ENCODE measurements at regions of chr4 and their contacts with region 1.

Region 1: GRCh38 chr4:54064295-54065111 is at the start of gene CHIC2:
- DNase-seq: peak; percentile 94
- H3K4me3 ChIP-seq: peak within 1 kb of the TSS; percentile 71 to 78 (median 78)
- H3K27ac ChIP-seq: peak within 1 kb of the TSS; percentile 84
- H3K4me1 ChIP-seq: peaks cover 43% of the 10 kb centered on the region
- H3K27me3 ChIP-seq: no peaks in the 10 kb centered on the region
- CTCF ChIP-seq: no peak
- total RNA-seq, gene CHIC2: 45.4 to 46.7 TPM

Region 2: DNA sequence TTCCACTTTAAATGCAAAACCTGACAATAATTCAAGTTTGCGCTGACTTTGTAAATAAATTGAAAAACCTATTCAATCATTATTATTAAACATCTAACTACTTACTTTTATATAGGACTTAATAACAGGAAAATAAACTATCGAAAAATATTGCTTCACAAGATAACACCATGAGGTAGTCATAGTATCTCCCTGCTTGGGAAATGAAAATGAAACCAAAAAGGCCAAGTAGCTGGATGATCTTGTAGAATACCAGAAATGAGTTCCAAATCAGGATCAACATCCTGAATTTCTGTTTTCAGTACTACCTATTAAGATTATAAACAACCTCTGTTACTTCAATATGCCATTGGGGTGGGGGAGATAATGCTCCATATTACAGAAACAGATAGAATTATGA is 59.0 kb before region 1 on chr4:
- CTCF ChIA-PET with region 1: no interaction called
- dilution Hi-C with region 1: no loop called
- in situ Hi-C with region 1: no loop called
- intact Hi-C with region 1: no loop called
- DNase-seq: peak; percentile 35
- H3K4me3 ChIP-seq: no peak overlapping the region
- H3K27ac ChIP-seq: no peak overlapping the region
- H3K4me1 ChIP-seq: no peaks in the 10 kb centered on the region
- H3K27me3 ChIP-seq: no peaks in the 10 kb centered on the region
- CTCF ChIP-seq: no peak

Region 3: DNA sequence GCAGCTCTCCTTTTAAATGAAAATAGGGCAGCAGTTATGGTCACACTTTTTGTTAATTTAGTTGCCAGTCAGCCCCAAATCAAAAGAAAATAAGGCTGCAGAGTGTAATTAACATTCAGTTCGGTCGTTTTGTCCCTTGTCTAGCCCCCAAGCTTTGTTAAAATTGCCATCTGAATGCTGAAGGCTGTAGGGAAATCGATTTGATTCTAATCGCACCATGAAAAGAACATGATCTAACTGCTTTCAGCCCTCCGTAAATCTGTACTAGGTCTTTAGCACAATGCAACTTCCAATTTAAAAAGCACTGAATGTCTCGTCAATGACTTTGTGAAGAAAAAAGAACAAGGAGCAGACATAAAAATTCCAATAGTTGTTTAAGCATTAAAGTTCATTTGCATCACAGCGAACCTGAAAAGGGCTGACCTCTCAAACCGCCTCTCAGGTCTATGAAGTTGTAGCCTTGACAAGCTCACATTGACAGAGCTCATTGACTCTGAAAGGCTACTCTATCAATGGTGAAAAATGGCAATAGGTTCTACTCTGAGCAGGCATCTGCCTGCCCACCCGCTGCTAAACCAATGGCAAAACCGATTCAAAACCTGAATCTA is 49.0 kb before region 1 on chr4:
- CTCF ChIA-PET with region 1: interaction called, 5 read pairs
- dilution Hi-C with region 1: no loop called
- in situ Hi-C with region 1: no loop called
- intact Hi-C with region 1: loop called (anchors 5 kb)
- DNase-seq: no peak
- H3K4me3 ChIP-seq: no peak overlapping the region
- H3K27ac ChIP-seq: no peak overlapping the region
- H3K4me1 ChIP-seq: peaks cover 3% of the 10 kb centered on the region
- H3K27me3 ChIP-seq: no peaks in the 10 kb centered on the region
- CTCF ChIP-seq: no peak

Region 4: DNA sequence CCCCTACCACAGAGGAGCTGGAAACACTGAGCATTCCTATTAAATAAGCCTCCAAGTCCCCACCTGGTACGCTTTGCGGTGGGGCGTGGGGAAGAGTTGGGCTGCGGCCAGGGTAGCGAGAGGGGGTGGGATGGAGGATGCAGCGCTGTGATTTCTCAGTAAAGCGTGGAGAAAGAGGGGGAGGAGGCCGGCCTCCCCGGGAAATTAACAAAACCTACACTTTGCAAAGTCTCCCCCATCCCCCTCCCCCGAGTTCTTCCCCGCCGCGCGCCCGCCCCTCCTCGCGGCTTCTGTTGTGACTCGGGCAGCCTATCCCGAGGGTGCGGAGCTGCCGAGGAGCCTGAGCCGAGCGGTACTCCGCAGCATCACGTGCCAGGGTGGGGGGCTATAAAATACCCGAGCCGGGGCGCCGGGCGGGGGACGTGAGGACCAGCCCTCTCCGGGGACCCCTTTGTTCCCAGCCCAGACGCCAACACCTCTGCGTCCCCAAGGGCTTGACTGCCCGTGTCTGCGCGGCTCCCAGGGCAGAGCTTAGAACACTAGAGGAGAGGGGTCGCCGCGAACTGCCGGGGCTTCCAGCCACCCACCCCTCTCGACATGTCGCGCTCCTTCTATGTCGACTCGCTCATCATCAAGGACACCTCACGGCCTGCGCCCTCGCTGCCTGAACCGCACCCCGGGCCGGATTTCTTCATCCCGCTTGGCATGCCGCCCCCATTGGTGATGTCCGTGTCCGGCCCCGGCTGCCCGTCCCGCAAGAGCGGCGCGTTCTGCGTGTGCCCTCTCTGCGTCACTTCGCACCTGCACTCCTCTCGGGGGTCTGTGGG is 35.5 kb after region 1 on chr4 and contains the start of gene GSX2:
- CTCF ChIA-PET with region 1: no interaction called
- dilution Hi-C with region 1: no loop called
- in situ Hi-C with region 1: no loop called
- intact Hi-C with region 1: loop called (anchors 5 kb)
- DNase-seq: peak; percentile 12
- H3K4me3 ChIP-seq: peak within 1 kb of the TSS; percentile 34 to 49 (median 47)
- H3K27ac ChIP-seq: no peak within 1 kb of the TSS
- H3K4me1 ChIP-seq: peaks cover 21% of the 10 kb centered on the region
- H3K27me3 ChIP-seq: peaks cover 23% of the 10 kb centered on the region
- CTCF ChIP-seq: no peak
- total RNA-seq, gene GSX2: not detected

Region 5: DNA sequence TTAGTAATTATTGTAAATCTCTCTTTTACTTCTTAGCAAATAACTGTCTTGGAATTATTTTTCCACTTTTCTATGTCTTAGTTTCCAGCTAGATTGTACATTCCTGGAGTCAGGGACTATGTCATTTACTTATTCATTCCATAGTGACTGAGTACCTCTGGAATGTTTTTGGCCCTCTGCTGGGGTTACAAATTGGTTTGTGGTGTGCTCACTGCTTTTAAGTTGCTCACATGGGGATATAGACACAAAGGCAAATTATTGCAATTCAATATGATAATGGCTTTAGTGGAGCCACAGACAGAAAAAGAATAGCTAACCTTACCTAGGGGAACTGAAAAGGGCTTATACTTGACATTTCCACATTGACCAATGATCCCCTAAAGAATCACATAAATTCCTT is 100.9 kb after region 1 on chr4:
- CTCF ChIA-PET with region 1: no interaction called
- dilution Hi-C with region 1: no loop called
- in situ Hi-C with region 1: no loop called
- intact Hi-C with region 1: loop called (anchors 5 kb)
- DNase-seq: peak; percentile 75
- H3K4me3 ChIP-seq: no peak overlapping the region
- H3K27ac ChIP-seq: peak overlapping the region; percentile 18
- H3K4me1 ChIP-seq: peaks cover 19% of the 10 kb centered on the region
- H3K27me3 ChIP-seq: no peaks in the 10 kb centered on the region
- CTCF ChIP-seq: peak in 1 of 2 donors; percentile 40